AG04449 (cell line): ENCODE measurements at regions of chr19 and their contacts with region 1.

Region 1: GRCh38 chr19:54674021-54674617 is 11.3 kb downstream of the LILRB4 start:
- DNase-seq: no peak
- H3K4me3 ChIP-seq: no peak overlapping the region
- CTCF ChIP-seq: peak; percentile 3

Region 2: GRCh38 chr19:54481322-54481930 is 192.7 kb before region 1 on chr19:
- CTCF ChIA-PET with region 1: interaction called, 28 read pairs
- POLR2A ChIA-PET with region 1: no interaction called
- DNase-seq: no peak
- H3K4me3 ChIP-seq: no peak overlapping the region
- CTCF ChIP-seq: peak; percentile 71

Region 3: DNA sequence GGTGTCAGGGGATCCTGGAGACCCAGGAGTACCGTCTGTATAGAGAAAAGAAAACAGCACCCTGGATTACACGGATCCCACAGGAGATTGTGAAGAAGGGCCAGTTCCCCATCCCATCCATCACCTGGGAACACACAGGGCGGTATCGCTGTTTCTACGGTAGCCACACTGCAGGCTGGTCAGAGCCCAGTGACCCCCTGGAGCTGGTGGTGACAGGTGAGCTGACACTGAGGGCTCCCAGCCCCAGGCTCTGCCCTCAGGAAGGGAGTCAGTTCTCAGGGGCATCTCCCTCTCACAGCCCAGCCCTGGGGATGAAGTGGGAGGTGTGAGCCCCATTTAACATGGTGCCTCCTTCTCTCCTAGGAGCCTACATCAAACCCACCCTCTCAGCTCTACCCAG is 79.4 kb before region 1 on chr19:
- CTCF ChIA-PET with region 1: no interaction called
- POLR2A ChIA-PET with region 1: no interaction called
- DNase-seq: no peak
- H3K4me3 ChIP-seq: no peak overlapping the region
- CTCF ChIP-seq: no peak